Aorta (tissue), 5 donors: ENCODE measurements at regions of chr11 and their contacts with region 1.

Region 1: DNA sequence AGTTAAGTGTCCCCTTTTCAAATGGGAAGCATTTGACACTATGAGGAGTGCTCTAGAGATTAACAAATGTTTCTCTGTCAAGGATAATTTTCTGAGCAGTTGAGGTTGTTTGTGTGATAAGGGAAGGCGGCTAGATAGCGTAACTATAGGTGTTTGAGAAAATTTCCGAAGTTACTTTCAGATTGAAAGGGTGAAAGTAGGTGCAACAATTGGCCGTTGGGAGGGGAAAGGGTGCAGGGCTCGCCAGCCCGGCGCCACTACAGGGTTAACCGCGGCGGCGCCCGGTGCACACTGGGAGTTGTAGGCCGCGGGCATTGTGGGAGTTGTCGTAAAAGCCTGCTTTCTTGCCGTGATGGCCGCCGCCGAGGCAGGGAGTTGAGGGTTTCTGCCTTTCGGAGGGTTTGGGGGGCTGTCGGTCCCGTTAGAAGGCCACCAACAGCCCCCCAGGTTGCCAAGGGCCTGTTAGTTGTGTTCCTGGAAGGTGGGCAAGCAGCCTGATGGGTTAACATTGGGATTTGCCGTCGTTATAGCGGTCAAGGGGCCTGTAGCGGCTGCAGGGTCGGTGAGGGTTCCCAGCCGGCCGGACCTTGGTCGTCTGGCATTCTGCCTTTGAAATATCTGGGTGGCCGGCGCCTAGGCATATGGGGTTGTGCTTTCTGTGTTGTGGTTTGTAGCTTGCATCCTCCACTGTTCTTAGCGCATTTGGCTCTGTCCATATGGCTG is 36.5 kb upstream of the HSD17B12 start:
- DNase-seq: peak; percentile 90 to 94
- ATAC-seq: peak; percentile 99
- H3K4me3 ChIP-seq: peak overlapping the region; percentile 79 to 94
- H3K27ac ChIP-seq: no peak overlapping the region
- H3K4me1 ChIP-seq: peaks cover 0 to 6% of the 10 kb centered on the region in 2 donors
- H3K27me3 ChIP-seq: no peaks in the 10 kb centered on the region

Region 2: DNA sequence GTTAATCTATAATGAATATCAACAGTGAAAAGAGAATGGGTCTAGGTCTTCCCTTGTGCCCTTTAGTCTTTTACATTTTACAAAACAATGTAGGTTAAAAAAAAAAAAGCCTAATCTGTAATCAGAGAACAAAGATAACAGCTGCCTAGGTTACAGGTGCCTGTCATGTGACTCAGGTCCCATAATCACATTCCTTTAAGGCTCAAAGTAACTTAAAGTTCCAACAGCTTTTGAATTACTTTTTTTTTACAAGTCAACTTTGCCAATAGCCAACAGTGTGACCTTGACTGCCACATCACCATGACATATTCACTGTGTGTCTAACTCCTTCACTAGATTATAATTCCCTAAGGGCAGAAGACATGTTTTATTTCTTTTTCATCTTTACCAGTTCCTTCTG is 569.2 kb before region 1 on chr11:
- intact Hi-C with region 1: no loop called
- DNase-seq: no peak
- ATAC-seq: no peak
- H3K4me3 ChIP-seq: no peak overlapping the region
- H3K27ac ChIP-seq: no peak overlapping the region
- H3K4me1 ChIP-seq: no peaks in the 10 kb centered on the region
- H3K27me3 ChIP-seq: no peaks in the 10 kb centered on the region

Region 3: DNA sequence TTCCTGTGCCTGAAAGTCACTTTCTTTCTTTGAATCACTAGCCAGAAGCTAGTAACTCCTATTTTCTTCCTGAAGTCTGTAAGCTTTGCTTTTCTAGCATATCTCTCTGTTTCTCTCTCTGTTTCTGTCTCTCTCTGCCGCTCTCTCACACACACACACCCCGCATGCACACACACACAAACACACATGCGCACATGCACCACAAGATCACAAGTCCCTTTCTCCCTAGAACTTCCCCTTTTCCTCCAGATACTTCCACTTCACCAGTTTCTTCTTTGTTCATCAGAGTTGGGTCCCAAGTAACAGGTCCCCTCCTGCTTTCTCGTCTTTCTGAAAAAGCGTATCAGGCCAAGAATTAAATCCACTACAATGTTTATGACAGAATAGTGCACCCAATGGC is 112.0 kb before region 1 on chr11:
- intact Hi-C with region 1: no loop called
- DNase-seq: no peak
- ATAC-seq: no peak
- H3K4me3 ChIP-seq: no peak overlapping the region
- H3K27ac ChIP-seq: no peak overlapping the region
- H3K4me1 ChIP-seq: no peaks in the 10 kb centered on the region
- H3K27me3 ChIP-seq: peaks cover 0 to 2% of the 10 kb centered on the region in 2 donors

Region 4: DNA sequence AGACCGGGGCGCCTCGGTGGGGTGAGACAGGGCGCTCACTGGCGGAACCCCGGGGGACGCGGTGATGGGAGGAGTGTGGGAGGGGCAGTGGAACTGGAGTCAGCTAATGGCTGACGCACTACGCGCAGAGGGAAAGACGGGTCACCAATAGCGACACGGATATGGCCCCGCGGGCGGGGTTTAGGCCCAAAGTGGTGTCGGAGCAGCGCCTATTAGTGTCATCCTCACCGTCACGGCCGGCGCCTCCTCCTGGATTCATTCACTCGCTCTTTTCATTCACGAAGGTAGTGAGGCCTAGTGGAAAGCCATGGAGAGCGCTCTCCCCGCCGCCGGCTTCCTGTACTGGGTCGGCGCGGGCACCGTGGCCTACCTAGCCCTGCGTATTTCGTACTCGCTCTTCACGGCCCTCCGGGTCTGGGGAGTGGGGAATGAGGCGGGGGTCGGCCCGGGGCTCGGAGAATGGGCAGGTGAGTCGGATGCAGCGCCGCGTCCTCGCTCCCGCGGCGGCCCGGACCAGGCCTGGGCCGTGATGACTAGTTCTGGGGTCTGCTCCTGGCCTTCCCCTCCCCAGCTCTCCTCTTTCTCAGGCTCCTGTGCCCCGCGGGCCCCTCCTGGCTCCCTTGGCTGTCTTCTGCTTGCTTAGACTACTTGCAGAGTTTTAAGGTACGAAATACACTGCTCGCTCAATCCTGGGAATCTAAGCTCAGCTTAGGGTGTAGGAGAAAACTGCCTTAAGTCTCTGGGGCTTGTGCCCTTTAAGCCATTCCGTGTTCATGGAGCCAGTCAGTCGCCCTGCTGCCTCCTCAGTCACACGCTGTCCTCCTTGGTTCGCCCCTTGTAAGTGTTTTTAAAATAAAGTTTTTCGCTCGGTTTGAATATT is 36.7 kb after region 1 on chr11 and contains the start of gene HSD17B12:
- intact Hi-C with region 1: loop called (anchors 5 kb)
- DNase-seq: peak; percentile 100
- ATAC-seq: peak; percentile 100
- H3K4me3 ChIP-seq: peak within 1 kb of the TSS; percentile 40 to 92
- H3K27ac ChIP-seq: peak within 1 kb of the TSS; percentile 63 to 71
- H3K4me1 ChIP-seq: peaks cover 0 to 1% of the 10 kb centered on the region in 2 donors
- H3K27me3 ChIP-seq: no peaks in the 10 kb centered on the region
- total RNA-seq, gene HSD17B12: 106 to 108 TPM

Region 5: GRCh38 chr11:43687120-43687791 is 43.2 kb after region 1 on chr11:
- intact Hi-C with region 1: loop called (anchors 5 kb)
- DNase-seq: peak in 1 of 2 donors; percentile 71
- ATAC-seq: peak; percentile 88
- H3K4me3 ChIP-seq: no peak overlapping the region
- H3K27ac ChIP-seq: peak overlapping the region in 1 of 2 donors; percentile 86
- H3K4me1 ChIP-seq: peaks cover 6 to 10% of the 10 kb centered on the region in 2 donors
- H3K27me3 ChIP-seq: no peaks in the 10 kb centered on the region

Region 6: DNA sequence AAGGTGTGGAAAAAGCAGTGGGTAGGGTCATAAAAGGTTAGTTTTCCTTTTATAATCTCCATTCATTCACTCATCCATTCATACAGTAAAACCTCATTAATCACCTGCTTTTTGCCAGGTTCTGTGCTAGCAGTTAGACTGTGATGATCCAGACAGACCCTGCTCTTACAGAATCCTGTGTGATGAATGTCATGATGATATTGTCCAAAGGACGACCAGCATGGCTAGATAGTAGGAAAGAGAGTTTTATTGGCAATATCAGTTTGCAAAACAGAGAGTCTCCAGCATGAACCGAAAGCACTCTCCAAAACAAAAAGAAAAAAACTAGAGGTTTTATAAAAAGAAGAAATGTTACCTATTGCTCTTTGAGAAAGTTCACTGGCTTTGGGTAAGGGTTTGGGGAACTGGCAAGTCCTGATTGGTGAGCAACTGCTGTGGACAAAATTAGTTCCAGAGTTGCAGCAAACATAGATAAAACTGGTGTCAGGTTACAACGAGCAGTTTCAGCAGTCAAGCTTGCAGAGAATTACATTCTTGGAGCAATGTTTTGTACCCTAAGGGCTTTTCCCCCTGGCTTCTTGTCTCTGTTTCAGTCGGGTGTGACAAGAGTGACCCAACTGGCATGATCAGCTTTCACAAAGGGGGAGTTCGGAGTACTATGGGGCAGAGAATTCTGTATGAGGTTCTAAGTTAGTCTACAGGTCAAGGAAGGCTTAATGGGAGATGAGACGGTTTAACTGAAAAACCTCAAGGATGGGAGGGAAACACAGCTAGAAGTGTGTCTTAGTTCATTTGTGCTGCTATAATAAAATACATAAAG is 94.7 kb after region 1 on chr11:
- intact Hi-C with region 1: loop called in 1 of 2 experiments (anchors 5 kb)
- DNase-seq: no peak
- ATAC-seq: peak; percentile 47
- H3K4me3 ChIP-seq: no peak overlapping the region
- H3K27ac ChIP-seq: peak overlapping the region; percentile 43 to 64
- H3K4me1 ChIP-seq: peaks cover 3 to 19% of the 10 kb centered on the region in 2 donors
- H3K27me3 ChIP-seq: no peaks in the 10 kb centered on the region

Region 7: DNA sequence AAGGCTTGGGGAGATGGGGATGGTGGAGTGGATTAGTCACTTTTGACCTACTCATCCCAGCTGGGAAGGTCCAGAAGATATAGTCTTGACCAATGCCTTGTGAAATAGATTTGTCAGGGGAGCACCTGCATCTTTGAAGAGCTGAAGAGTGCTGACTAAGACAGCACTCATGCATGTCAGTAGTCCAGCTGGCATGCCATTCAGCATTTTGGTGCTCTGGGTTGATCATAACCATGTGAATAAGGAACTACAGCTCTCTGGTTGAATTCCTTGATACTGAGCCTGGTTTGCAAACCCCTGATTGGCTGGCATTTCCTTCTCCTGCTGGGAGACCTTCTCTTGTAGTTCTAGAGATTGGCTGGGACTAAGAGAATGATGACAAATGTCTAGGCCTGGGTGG is 772.7 kb after region 1 on chr11:
- intact Hi-C with region 1: no loop called
- DNase-seq: no peak
- ATAC-seq: no peak
- H3K4me3 ChIP-seq: no peak overlapping the region
- H3K27ac ChIP-seq: no peak overlapping the region
- H3K4me1 ChIP-seq: no peaks in the 10 kb centered on the region
- H3K27me3 ChIP-seq: no peaks in the 10 kb centered on the region